GM10248 (cell line): ENCODE measurements at regions of chr13 and their contacts with region 1.

Region 1: GRCh38 chr13:75326173-75327134 is 155.5 kb downstream of the TBC1D4 start:
- DNase-seq: peak; percentile 54
- CTCF ChIP-seq: no peak

Region 2: DNA sequence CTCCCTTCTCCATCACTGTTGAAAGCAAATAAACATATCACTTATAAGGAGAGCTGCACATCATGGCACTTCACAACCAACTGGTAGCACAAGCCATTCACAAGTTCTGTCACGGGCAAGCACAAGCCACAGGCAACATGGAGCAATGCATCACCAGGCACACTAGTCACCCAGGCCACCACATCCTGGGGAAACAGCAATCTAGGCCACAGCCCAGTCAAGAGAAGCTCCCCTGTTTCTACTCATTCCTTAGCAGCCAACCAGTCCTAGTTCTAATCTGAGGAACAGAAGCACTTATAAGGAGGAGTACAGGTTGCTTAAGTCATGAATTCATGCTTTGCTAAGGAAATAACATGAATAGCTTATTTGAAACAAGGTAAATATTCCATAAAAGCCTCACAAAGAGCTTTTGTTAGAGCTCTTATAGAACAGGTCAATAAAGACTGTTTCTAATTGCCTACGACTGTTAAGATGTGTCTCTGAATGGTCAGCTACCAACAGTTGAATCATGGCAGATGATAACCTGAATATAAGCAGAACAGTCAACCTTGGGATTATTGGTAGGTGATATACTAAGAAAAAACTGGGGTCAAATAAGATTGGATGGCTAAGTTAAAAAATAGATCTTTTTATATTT is 13.5 kb before region 1 on chr13:
- CTCF ChIA-PET with region 1: interaction called, 31 read pairs
- POLR2A ChIA-PET with region 1: no interaction called
- DNase-seq: no peak
- CTCF ChIP-seq: no peak

Region 3: DNA sequence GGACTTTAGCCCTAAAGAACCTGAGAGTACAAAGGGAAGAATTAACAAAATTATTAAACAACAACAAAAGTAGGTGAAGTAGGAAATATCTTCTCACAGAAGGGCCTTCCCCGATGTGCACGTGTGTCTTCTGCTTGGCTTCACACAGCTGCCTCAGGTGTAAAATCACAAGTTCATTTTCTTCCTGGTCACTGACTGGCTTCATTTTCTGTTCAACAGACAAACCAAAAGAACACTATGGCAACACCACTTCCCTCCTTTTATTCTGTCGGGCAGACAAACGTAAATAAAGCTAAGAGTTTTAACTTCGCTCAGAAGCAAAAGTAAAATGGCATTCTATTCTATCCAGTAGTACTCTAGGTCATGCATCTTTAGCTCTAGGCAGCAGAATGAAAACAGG is 14.6 kb after region 1 on chr13:
- CTCF ChIA-PET with region 1: interaction called, 11 read pairs
- POLR2A ChIA-PET with region 1: no interaction called
- DNase-seq: peak; percentile 42
- CTCF ChIP-seq: no peak

Region 4: DNA sequence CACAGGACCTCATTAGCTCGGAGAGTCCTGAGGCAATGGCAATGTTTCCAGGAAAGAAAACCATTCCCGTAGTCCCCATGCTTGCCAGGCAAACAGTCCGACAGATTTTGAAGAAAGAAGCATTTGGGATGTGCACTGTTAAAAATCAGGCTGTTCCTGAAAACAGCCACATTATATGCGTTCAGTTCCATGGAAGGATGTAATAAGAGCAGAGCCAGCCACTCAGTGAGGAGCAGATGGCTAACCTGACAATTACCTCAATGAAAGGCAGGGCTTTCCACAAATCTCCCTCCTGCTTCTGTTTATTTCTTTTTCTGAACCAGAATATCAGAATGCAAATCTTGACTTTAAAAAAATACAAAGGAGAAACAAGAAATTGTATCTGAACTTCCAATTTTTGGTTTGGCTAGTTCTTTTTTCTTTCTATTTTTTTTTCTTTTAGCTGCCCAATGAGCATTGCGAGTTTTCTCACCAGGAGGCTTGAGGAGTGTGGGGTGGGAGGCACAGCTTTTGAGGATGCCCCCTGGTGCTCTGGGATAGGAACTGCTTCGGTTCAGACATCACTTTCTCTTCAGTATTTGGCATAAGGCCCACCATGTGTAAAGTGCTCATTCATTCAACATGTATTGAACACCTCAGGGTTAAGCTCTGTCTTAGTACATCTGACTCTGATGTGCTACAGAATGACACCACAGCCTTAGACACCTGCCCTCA is 31.3 kb after region 1 on chr13:
- CTCF ChIA-PET with region 1: interaction called, 21 read pairs
- POLR2A ChIA-PET with region 1: no interaction called
- DNase-seq: peak; percentile 67
- CTCF ChIP-seq: peak; percentile 45

Region 5: GRCh38 chr13:75365724-75366173 is 39.3 kb after region 1 on chr13:
- CTCF ChIA-PET with region 1: interaction called, 12 read pairs
- POLR2A ChIA-PET with region 1: no interaction called
- DNase-seq: peak; percentile 52
- CTCF ChIP-seq: no peak

Region 6: GRCh38 chr13:75372517-75372916 is 46.1 kb after region 1 on chr13:
- CTCF ChIA-PET with region 1: interaction called, 14 read pairs
- POLR2A ChIA-PET with region 1: no interaction called
- DNase-seq: peak; percentile 40
- CTCF ChIP-seq: peak; percentile 73